Activated CD4-positive, alpha-beta T cell treated with anti-CD3 and anti-CD28 coated beads, Interleukin-2, amount 10 ng/mL, durations not matched to agents 24 days and 14 days (primary cell): ENCODE measurements at regions of chr4 and their contacts with region 1.

Region 1: GRCh38 chr4:26319467-26319948 is 1.3 kb upstream of the RBPJ start:
- DNase-seq: peak; percentile 99
- H3K4me3 Mint-ChIP-seq: peak overlapping the region; percentile 97
- H3K27ac Mint-ChIP-seq: peak overlapping the region; percentile 99
- H3K4me1 Mint-ChIP-seq: peaks cover 41% of the 10 kb centered on the region
- H3K27me3 Mint-ChIP-seq: peaks cover 3% of the 10 kb centered on the region

Region 2: GRCh38 chr4:25938787-25939186 is 380.7 kb before region 1 on chr4:
- intact Hi-C with region 1: loop called (anchors 2 kb)
- DNase-seq: peak; percentile 65
- H3K4me3 Mint-ChIP-seq: peak overlapping the region; percentile 20
- H3K27ac Mint-ChIP-seq: peak overlapping the region; percentile 89
- H3K4me1 Mint-ChIP-seq: peaks cover 26% of the 10 kb centered on the region
- H3K27me3 Mint-ChIP-seq: peaks cover 5% of the 10 kb centered on the region

Region 3: GRCh38 chr4:26081795-26082498 is 237.6 kb before region 1 on chr4:
- intact Hi-C with region 1: loop called (anchors 1 kb)
- DNase-seq: peak; percentile 64
- H3K4me3 Mint-ChIP-seq: peak overlapping the region; percentile 15
- H3K27ac Mint-ChIP-seq: peak overlapping the region; percentile 89
- H3K4me1 Mint-ChIP-seq: peaks cover 68% of the 10 kb centered on the region
- H3K27me3 Mint-ChIP-seq: no peaks in the 10 kb centered on the region

Region 4: GRCh38 chr4:26144526-26145155 is 174.9 kb before region 1 on chr4:
- intact Hi-C with region 1: loop called (anchors 2 kb)
- DNase-seq: no peak
- H3K4me3 Mint-ChIP-seq: peak overlapping the region; percentile 56
- H3K27ac Mint-ChIP-seq: peak overlapping the region; percentile 98
- H3K4me1 Mint-ChIP-seq: peaks cover 53% of the 10 kb centered on the region
- H3K27me3 Mint-ChIP-seq: no peaks in the 10 kb centered on the region

Region 5: DNA sequence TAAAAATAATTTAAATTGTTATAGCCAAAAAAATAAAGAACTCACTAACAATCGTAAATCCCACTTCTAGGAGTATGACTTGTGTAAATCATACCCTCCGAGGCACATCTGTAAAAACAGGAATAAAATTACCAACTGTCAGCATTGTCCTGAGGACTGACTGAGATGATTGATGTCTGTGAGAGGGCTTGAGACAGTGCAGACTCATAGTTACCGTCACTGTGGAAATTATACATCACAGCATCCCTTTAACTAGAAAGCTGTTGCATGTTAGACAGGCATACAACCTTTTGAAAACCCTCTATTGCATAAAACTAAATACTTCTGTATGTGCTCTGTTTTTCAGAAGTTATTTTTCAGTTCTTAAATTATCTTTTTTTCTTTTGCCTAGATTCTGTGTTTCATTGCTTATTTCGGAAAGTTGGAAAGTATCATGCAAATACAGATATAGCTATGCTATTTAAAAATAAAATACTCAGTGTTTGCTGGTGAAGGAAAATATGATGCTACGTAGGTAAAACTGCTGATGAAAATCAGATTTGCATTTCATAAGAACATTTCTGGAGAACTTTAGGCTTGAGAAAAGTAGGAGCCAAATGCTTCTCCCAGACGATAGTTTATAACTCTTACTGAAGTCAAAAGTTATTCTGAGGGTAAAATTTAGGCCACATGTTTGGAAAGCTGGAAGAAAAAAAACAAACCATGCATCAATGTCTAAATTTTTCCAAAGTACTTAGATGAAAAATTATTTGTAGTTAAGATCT is 12.3 kb before region 1 on chr4:
- intact Hi-C with region 1: loop called (anchors 1 kb)
- DNase-seq: no peak
- H3K4me3 Mint-ChIP-seq: peak overlapping the region; percentile 51
- H3K27ac Mint-ChIP-seq: peak overlapping the region; percentile 91
- H3K4me1 Mint-ChIP-seq: peaks cover 26% of the 10 kb centered on the region
- H3K27me3 Mint-ChIP-seq: no peaks in the 10 kb centered on the region

Region 6: GRCh38 chr4:26568446-26568994 is 249.0 kb after region 1 on chr4:
- intact Hi-C with region 1: no loop called
- DNase-seq: no peak
- H3K4me3 Mint-ChIP-seq: no peak overlapping the region
- H3K27ac Mint-ChIP-seq: no peak overlapping the region
- H3K4me1 Mint-ChIP-seq: peaks cover 17% of the 10 kb centered on the region
- H3K27me3 Mint-ChIP-seq: no peaks in the 10 kb centered on the region